Dendritic cell treated with granulocyte-macrophage colony-stimulating factor and Interleukin-4, amounts not matched to agents 40 ng/mL and 50 ng/mL, for 4 days (primary cell): ENCODE measurements at regions of chr11 and their contacts with region 1.

Region 1: GRCh38 chr11:122863704-122864326 is 18.7 kb upstream of the JHY start:
- H3K4me3 Mint-ChIP-seq: no peak overlapping the region
- H3K27ac Mint-ChIP-seq: no peak overlapping the region
- H3K4me1 Mint-ChIP-seq: peaks cover 22% of the 10 kb centered on the region
- H3K27me3 Mint-ChIP-seq: peaks cover 4% of the 10 kb centered on the region

Region 2: GRCh38 chr11:122317305-122317704 is 546.5 kb before region 1 on chr11:
- intact Hi-C with region 1: no loop called
- H3K4me3 Mint-ChIP-seq: no peak overlapping the region
- H3K27ac Mint-ChIP-seq: no peak overlapping the region
- H3K4me1 Mint-ChIP-seq: peaks cover 39% of the 10 kb centered on the region
- H3K27me3 Mint-ChIP-seq: no peaks in the 10 kb centered on the region

Region 3: DNA sequence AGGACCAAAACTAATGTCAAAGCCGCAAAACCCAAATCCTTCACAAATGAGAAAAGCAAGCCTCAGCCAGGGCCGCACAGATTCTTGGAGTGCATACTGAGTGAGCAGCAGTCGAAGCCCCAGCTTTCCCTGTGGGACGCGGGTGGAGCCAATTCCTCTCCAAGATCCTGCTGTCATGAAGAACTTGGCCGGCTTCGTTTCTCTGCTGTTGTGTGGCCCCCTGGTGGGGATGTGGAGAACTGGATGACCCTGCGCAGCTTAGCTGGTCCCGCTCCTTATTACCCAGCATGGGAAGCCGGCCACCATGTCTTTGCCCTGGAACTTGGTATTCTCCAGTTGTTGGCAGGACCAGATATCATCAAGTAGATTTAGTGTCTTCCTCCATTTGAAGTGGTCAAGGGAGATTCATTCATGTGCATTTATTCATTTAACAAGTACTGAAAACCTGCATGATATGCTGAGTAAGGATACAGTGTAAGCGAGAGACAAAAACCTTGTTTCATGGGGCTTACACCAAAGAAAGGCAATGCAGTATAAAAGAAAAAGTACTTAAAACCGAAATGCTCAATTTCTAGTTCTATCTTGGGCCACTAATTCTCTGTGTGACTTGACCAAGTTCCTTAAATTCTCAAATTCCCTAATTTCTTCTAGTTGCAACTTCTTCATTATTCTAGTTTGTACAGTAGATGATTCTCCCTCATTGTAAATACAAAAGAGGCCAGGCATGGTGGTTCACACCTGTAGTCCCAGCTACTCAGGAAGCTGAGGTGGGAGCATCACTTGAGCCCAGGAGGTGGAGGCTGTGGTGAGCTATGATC is 82.2 kb before region 1 on chr11:
- intact Hi-C with region 1: no loop called
- H3K4me3 Mint-ChIP-seq: peak overlapping the region; percentile 13
- H3K27ac Mint-ChIP-seq: no peak overlapping the region
- H3K4me1 Mint-ChIP-seq: peaks cover 46% of the 10 kb centered on the region
- H3K27me3 Mint-ChIP-seq: peaks cover 4% of the 10 kb centered on the region

Region 4: DNA sequence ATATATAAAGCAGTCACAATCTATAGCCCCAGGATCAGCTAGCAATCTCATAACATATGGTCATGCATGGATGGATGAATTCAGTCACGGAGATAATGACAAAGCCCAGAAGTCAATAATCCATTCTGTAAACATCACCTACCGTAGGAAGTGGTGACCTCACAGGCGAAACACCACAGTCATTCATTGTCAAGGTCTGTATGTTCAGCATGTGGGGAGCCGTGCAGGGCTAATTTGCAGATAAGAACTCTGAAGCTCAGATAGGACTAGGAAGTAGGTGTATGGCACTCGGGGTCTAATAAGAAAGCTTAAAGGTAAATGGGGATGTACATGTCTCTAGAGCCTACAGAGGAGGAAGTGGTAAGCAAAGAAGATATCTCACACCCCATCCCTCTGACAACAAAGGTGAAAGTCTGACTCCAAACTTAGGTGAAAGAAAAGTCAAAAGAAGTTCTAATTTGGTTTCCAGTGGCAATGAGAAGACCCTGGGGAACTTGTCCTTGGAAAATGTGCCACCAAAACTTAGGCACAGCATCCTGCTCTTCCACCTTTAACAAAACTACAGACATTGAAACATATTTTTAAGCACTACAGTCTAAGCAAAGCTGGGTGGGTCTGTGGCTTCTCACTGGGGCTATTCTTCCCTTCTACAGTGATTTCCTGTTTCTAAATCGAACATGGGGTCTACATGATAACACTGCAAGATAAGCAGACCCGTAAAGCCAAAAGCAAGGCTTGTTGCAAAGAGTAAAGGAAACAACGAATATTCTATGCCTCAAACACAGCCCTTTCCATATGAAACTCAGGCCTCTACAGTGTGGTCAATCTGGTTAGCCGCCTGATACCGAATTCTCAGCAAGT is 20.3 kb before region 1 on chr11:
- intact Hi-C with region 1: no loop called
- H3K4me3 Mint-ChIP-seq: no peak overlapping the region
- H3K27ac Mint-ChIP-seq: no peak overlapping the region
- H3K4me1 Mint-ChIP-seq: peaks cover 13% of the 10 kb centered on the region
- H3K27me3 Mint-ChIP-seq: peaks cover 6% of the 10 kb centered on the region

Region 5: GRCh38 chr11:123054301-123055065 is 190.7 kb after region 1 on chr11:
- intact Hi-C with region 1: loop called (anchors 1 kb)
- H3K4me3 Mint-ChIP-seq: no peak overlapping the region
- H3K27ac Mint-ChIP-seq: no peak overlapping the region
- H3K4me1 Mint-ChIP-seq: peaks cover 43% of the 10 kb centered on the region
- H3K27me3 Mint-ChIP-seq: no peaks in the 10 kb centered on the region